Activated T-helper 1 cell treated with anti-CD3 and anti-CD28 coated beads, Interleukin-12 subunit alpha, Interleukin-12 subunit beta, Interleukin-2, Interleukin-4 antibody, amounts not matched to agents 30 ng/mL and 10 ng/mL and 1 ng/mL, durations not matched to agents 14 hours and 24 hours and 36 hours (primary cell): ENCODE measurements at regions of chr15 and their contacts with region 1.

Region 1: GRCh38 chr15:38563723-38564519 is 693 bp downstream of the RASGRP1 start:
- DNase-seq: peak; percentile 85
- H3K4me3 Mint-ChIP-seq: peak overlapping the region; percentile 96
- H3K27ac Mint-ChIP-seq: peak overlapping the region; percentile 98
- H3K4me1 Mint-ChIP-seq: peaks cover 61% of the 10 kb centered on the region
- H3K27me3 Mint-ChIP-seq: peaks cover 2% of the 10 kb centered on the region

Region 2: GRCh38 chr15:38440353-38441129 is 123.4 kb before region 1 on chr15:
- intact Hi-C with region 1: loop called (anchors 1 kb)
- DNase-seq: peak; percentile 38
- H3K4me3 Mint-ChIP-seq: no peak overlapping the region
- H3K27ac Mint-ChIP-seq: peak overlapping the region; percentile 56
- H3K4me1 Mint-ChIP-seq: peaks cover 18% of the 10 kb centered on the region
- H3K27me3 Mint-ChIP-seq: peaks cover 50% of the 10 kb centered on the region

Region 3: GRCh38 chr15:38508647-38509046 is 55.3 kb before region 1 on chr15:
- intact Hi-C with region 1: loop called (anchors 2 kb)
- DNase-seq: peak; percentile 8
- H3K4me3 Mint-ChIP-seq: no peak overlapping the region
- H3K27ac Mint-ChIP-seq: peak overlapping the region; percentile 91
- H3K4me1 Mint-ChIP-seq: peaks cover 45% of the 10 kb centered on the region
- H3K27me3 Mint-ChIP-seq: no peaks in the 10 kb centered on the region

Region 4: DNA sequence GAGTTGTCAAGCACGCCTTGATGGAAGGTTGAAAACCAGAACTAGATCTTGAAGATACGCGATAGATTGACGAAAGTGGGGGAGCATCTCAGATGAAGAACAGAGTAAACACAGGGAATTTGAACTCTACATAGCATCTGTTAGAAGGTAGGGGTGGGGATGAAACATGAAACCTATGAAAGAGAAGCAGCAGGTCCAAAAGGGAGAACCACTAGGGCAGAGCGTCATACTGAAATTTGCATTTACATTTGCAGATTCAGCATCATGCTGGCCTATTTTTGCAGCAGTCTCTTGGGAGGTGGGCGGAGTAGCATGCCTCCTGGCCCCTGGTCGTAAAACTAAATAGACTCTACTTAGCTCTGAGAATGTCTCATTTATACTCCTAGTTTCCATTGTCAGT is 46.8 kb after region 1 on chr15:
- intact Hi-C with region 1: loop called (anchors 1 kb)
- DNase-seq: peak; percentile 49
- H3K4me3 Mint-ChIP-seq: peak overlapping the region; percentile 73
- H3K27ac Mint-ChIP-seq: peak overlapping the region; percentile 98
- H3K4me1 Mint-ChIP-seq: peaks cover 78% of the 10 kb centered on the region
- H3K27me3 Mint-ChIP-seq: no peaks in the 10 kb centered on the region

Region 5: GRCh38 chr15:38671675-38672254 is 107.8 kb after region 1 on chr15:
- intact Hi-C with region 1: loop called (anchors 1 kb)
- DNase-seq: peak; percentile 65
- H3K4me3 Mint-ChIP-seq: peak overlapping the region; percentile 59
- H3K27ac Mint-ChIP-seq: peak overlapping the region; percentile 93
- H3K4me1 Mint-ChIP-seq: peaks cover 79% of the 10 kb centered on the region
- H3K27me3 Mint-ChIP-seq: no peaks in the 10 kb centered on the region

Region 6: DNA sequence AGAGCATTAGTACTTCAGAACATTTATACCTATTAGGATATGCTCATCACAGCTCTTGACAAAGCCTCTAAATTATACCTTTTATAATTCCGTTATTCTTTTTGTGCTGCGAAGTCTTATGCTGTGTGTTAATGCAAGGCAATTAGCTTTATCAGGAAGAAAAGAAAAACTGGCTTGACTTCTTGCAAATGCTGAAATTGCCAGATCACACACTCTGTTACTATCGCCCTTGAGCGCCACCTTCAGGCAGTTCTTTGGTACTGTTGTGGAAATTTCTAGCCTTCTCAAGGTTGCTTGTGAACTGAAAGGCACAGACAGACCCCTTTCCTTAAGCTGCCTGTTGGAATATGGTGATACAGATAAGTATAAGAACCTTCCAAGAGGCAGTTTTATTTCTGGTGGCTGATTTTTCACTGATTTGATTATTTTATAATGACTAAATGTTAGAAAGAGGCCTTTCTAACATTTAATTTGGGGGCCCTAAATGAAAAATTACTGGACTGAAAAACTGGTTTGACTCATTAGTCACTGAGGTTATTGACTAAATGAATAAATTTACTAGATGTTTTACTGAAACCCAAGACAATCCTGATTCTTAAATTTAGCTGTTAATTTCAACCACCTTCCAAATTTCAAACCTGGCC is 126.9 kb after region 1 on chr15:
- intact Hi-C with region 1: loop called (anchors 1 kb)
- DNase-seq: peak; percentile 75
- H3K4me3 Mint-ChIP-seq: no peak overlapping the region
- H3K27ac Mint-ChIP-seq: peak overlapping the region; percentile 73
- H3K4me1 Mint-ChIP-seq: peaks cover 90% of the 10 kb centered on the region
- H3K27me3 Mint-ChIP-seq: no peaks in the 10 kb centered on the region